ENCODE measurements at regions of chr18 and their contacts with region 1.

Region 1: DNA sequence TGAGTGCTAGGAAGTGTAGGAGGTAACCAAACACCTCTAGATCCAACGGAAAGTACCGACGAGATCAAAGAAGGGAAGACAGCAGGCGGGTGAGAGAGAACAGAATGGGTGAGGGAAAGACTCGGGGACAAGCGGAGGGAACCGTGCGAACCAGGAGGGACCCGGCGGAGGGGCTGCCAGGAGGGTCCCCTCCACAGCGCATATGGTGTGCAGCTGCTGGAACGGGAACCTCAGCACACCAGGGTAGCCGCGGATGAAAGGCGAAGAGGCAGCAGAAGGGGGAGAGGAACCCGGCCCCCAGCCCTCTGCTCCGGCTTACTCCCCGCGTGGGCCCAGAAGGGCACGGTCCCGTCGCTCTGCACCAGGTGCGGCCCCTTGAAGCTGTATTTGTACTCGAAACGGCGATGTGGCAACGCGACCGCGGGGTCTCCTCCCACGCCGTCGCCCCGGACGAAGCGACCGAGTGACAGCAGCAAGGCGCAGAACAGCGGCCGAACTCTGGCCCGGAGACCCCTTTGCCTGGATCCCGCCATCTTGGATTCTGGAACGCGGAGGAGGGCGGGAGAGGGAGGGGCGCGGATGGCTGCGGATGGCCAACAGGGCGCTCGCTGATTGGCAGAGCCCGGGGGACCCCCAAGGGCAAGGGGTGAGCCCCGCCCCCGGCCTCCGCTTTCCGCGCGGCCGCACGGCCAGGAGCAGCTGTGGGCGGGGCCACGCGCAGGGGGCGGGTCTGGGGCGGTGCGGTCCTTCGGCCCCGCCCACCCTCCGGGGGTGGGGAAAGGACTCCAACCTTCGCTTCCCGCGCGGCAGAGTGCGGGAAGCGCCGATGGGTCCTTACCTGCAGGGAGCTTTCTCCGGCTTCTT is at the start of gene LMAN1:
- DNase-seq: peak; percentile 89
- H3K4me3 Mint-ChIP-seq: peak within 1 kb of the TSS; percentile 100
- H3K27ac Mint-ChIP-seq: peak within 1 kb of the TSS; percentile 100
- H3K4me1 Mint-ChIP-seq: peaks cover 29% of the 10 kb centered on the region
- H3K27me3 Mint-ChIP-seq: peaks cover 9% of the 10 kb centered on the region
- total RNA-seq, gene LMAN1: 141 and 146 TPM in 2 replicates

Region 2: DNA sequence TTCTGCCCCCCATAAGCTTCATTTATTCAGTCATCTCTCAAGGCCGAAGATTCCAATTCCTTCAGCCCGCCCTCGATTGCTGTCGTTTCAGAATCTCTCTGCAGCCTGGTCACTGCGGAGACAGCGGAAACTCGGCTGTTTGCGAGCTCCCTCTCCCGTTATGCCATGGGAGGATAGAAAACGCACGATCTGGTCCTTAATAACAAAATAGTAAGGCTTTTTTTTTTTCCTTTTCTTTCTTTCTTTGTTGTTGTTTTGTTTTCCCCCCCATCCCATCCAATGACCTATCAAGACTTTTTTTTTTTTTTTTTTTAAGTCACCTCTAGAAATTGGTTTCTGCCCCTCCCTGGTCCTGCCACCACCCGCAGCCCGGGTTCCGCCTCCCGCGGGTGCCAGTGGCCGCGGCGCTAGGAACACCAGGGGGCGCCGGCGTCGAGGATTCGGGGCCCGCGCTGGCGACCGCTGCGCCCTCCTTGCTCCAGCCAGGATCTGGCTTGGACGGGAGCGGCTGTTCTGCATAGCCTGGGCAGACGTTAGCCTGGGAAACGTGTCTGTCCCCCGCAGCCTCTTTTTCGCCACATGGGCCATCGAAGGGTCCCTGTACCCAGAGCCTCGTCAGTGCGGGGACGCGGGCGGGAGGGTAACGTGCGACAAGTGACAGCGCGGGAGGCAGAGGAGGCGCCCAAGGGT is 50.6 kb before region 1 on chr18:
- intact Hi-C with region 1: no loop called
- DNase-seq: peak; percentile 54
- H3K4me3 Mint-ChIP-seq: peak overlapping the region; percentile 50
- H3K27ac Mint-ChIP-seq: no peak overlapping the region
- H3K4me1 Mint-ChIP-seq: peaks cover 3% of the 10 kb centered on the region
- H3K27me3 Mint-ChIP-seq: peaks cover 45% of the 10 kb centered on the region

Region 3: GRCh38 chr18:59340817-59341216 is 18.1 kb before region 1 on chr18:
- intact Hi-C with region 1: loop called (anchors 1 kb)
- DNase-seq: no peak
- H3K4me3 Mint-ChIP-seq: peak overlapping the region; percentile 43
- H3K27ac Mint-ChIP-seq: peak overlapping the region; percentile 67
- H3K4me1 Mint-ChIP-seq: peaks cover 43% of the 10 kb centered on the region
- H3K27me3 Mint-ChIP-seq: no peaks in the 10 kb centered on the region

Region 4: GRCh38 chr18:59377608-59378337 is 18.8 kb after region 1 on chr18:
- intact Hi-C with region 1: loop called (anchors 1 kb)
- DNase-seq: no peak
- H3K4me3 Mint-ChIP-seq: no peak overlapping the region
- H3K27ac Mint-ChIP-seq: no peak overlapping the region
- H3K4me1 Mint-ChIP-seq: peaks cover 15% of the 10 kb centered on the region
- H3K27me3 Mint-ChIP-seq: peaks cover 12% of the 10 kb centered on the region

Region 5: GRCh38 chr18:59576541-59577385 is 217.8 kb after region 1 on chr18:
- intact Hi-C with region 1: no loop called
- DNase-seq: no peak
- H3K4me3 Mint-ChIP-seq: no peak overlapping the region
- H3K27ac Mint-ChIP-seq: no peak overlapping the region
- H3K4me1 Mint-ChIP-seq: no peaks in the 10 kb centered on the region
- H3K27me3 Mint-ChIP-seq: no peaks in the 10 kb centered on the region